Transverse colon (tissue), 4 donors: ENCODE measurements at regions of chr1 and their contacts with region 1.

Region 1: GRCh38 chr1:237539055-237539454 is 351.7 kb downstream of the ZP4 start:
- DNase-seq: no peak
- H3K4me3 ChIP-seq: no peak overlapping the region
- H3K27ac ChIP-seq: no peak overlapping the region
- H3K4me1 ChIP-seq: no peaks in the 10 kb centered on the region
- H3K27me3 ChIP-seq: no peaks in the 10 kb centered on the region
- CTCF ChIP-seq: no peak
- EP300 ChIP-seq: no peak
- POLR2A ChIP-seq: no peak

Region 2: GRCh38 chr1:236685917-236686814 is 852.9 kb before region 1 on chr1 and contains the start of gene ACTN2:
- in situ Hi-C with region 1: no loop called
- intact Hi-C with region 1: loop called (anchors 10 kb)
- DNase-seq: peak; percentile 40
- H3K4me3 ChIP-seq: peak within 1 kb of the TSS; percentile 18 to 37 (median 28)
- H3K27ac ChIP-seq: no peak within 1 kb of the TSS
- H3K4me1 ChIP-seq: peaks cover 0 to 14% (median 8%) of the 10 kb centered on the region in 4 donors
- H3K27me3 ChIP-seq: peaks cover 30% of the 10 kb centered on the region
- CTCF ChIP-seq: no peak
- EP300 ChIP-seq: no peak
- POLR2A ChIP-seq: no peak
- total RNA-seq, gene ACTN2: 0.16 to 0.55 TPM in 2 of 4 donors, not detected in the others